Breast epithelium (tissue), 4 donors: ENCODE measurements at regions of chr13 and their contacts with region 1.

Region 1: DNA sequence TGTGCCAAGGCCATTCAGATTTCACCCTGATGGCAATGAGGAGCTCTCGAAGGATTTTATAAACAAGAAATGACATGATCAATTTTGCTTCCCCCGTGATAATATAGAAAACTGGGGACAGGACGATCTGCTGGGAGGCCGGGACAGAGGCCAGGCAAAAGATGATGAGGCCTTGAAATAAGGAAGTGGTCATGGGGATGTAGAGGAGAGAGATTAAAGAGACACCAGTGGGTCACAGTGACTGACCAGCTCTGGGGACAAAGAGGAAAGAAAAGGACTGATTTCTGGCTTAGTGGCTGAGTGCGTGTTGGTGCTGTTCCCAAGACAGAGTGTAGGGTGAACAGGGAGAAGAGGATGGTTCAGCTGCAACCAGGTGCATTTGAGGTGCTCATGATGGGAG is 68.7 kb upstream of the FLT1 start:
- DNase-seq: no peak
- H3K4me3 ChIP-seq: no peak overlapping the region
- H3K27ac ChIP-seq: peak overlapping the region in 1 of 2 donors; percentile 70
- H3K4me1 ChIP-seq: no peaks in the 10 kb centered on the region
- H3K27me3 ChIP-seq: no peaks in the 10 kb centered on the region
- CTCF ChIP-seq: no peak
- POLR2A ChIP-seq: no peak

Region 2: DNA sequence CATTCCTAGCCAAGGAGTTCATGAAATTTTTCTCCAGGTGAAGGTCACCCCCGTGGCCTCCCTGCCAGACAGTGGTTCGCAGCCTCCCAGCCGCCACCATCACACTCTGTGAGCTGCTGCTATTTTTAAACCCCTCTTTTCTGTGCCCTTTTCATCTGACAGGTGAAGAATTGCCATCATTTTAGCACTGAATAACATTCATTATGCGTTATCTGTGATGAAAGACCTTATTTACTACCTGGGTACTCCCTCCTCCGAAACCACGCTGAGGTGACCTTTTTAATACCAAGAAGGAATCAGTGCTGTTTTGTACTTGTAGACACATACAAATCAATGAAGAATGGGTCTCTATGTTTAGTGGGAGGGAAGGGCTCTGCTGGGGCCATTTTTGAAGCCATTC is 1654.1 kb before region 1 on chr13:
- intact Hi-C with region 1: no loop called
- DNase-seq: no peak
- H3K4me3 ChIP-seq: no peak overlapping the region
- H3K27ac ChIP-seq: no peak overlapping the region
- H3K4me1 ChIP-seq: no peaks in the 10 kb centered on the region
- H3K27me3 ChIP-seq: peaks cover 0 to 4% of the 10 kb centered on the region in 2 donors
- CTCF ChIP-seq: no peak
- POLR2A ChIP-seq: no peak

Region 3: DNA sequence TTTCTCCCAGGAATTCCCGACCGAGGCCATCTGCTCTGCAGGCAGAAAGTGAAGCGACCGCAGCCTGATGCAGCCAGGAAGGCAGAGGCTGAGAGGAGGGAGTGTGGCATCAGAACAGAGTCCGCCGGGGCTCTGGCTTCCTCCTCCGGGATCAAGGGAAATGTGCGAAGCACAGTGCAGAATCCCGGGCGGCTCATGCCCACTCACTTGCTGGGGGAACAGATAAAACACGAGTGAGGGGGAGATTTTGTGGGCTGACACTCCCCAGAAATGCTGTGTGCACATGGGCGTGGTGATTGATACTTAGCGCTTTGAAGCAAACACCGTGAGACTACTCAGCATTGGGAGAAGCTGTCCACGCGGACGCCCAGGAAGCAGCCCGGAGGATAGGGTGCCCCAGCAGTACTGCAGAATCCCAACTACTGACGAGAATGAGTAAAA is 20.1 kb after region 1 on chr13:
- intact Hi-C with region 1: loop called (anchors 1 kb)
- DNase-seq: no peak
- H3K4me3 ChIP-seq: peak overlapping the region in 1 of 3 donors; percentile 28
- H3K27ac ChIP-seq: no peak overlapping the region
- H3K4me1 ChIP-seq: no peaks in the 10 kb centered on the region
- H3K27me3 ChIP-seq: no peaks in the 10 kb centered on the region
- CTCF ChIP-seq: no peak
- POLR2A ChIP-seq: no peak